ENCODE measurements at regions of chr20 and their contacts with region 1.

Region 1: GRCh38 chr20:10667077-10667401 is 6.8 kb downstream of the JAG1 start:
- DNase-seq: peak in 1 of 2 donors; percentile 91
- H3K4me3 ChIP-seq: no peak overlapping the region
- CTCF ChIP-seq: no peak
- POLR2A ChIP-seq: no peak

Region 2: GRCh38 chr20:10476319-10476724 is 190.7 kb before region 1 on chr20:
- intact Hi-C with region 1: loop called (anchors 10 kb)
- DNase-seq: no peak
- H3K4me3 ChIP-seq: no peak overlapping the region
- CTCF ChIP-seq: no peak
- POLR2A ChIP-seq: no peak

Region 3: DNA sequence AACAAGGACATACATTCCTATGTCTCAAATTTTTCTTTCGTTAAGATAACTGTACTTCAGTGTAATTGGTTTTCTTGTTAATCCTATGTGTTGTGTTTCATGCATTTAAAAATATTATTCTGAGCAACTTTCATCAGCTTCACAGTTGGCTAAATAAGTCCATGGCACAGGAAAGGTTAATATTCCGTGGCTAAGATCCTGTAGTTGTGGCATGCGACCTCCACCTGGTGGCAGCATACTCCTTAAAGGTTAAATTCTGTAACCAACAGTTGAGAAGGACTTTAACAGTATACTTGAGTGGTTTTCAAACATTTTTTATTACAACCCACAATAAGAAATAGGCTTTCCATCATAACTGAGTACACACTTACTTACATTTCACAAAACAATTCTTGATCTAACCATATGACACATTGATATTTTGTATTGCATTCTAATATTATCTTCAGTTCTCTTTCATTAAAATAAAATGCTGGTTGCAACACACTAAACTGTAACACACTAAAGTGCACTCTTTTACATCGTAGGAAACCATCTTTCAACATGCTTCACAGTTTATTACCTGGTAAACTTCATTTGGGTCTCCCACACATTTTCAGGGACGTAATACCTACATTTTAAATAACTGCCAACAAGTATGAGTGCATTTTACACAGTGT is 113.6 kb before region 1 on chr20:
- intact Hi-C with region 1: loop called (anchors 10 kb)
- DNase-seq: peak; percentile 69 to 92
- H3K4me3 ChIP-seq: no peak overlapping the region
- CTCF ChIP-seq: peak in 1 of 3 donors; percentile 88
- POLR2A ChIP-seq: no peak

Measured in lower leg skin (tissue), 4 donors.